ENCODE measurements at regions of chr4 and their contacts with region 1.

Region 1: DNA sequence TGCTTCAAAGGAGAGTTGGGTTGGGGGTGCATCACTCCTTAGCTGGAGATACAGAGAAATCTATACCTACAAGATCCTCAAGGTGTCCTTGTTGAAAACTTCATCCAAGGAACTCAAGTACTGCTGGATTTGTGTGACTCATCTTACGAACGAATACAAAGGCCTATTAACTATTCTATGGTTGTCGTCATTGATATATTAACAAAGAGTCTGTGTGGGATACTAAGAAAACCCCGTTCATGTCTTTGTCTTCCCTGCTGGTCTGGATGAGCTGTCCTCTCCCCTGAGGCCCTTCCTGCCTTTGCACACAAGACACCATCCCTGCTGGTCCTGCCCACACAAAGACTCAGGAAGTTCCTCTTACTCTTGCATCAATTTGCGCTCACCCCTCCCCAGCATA is 54.9 kb upstream of the IRF2 start:
- DNase-seq: no peak
- ATAC-seq: no peak
- H3K4me3 ChIP-seq: no peak overlapping the region
- H3K27ac ChIP-seq: no peak overlapping the region
- H3K4me1 ChIP-seq: peaks cover 0 to 18% (median 9%) of the 10 kb centered on the region in 12 donors
- H3K27me3 ChIP-seq: no peaks in the 10 kb centered on the region
- CTCF ChIP-seq: no peak
- POLR2A ChIP-seq: no peak

Region 2: GRCh38 chr4:184489771-184490170 is 39.5 kb before region 1 on chr4:
- intact Hi-C with region 1: loop called in 1 of 10 experiments (anchors 5 kb)
- DNase-seq: no peak
- ATAC-seq: no peak
- H3K4me3 ChIP-seq: no peak overlapping the region
- H3K27ac ChIP-seq: no peak overlapping the region
- H3K4me1 ChIP-seq: no peaks in the 10 kb centered on the region
- H3K27me3 ChIP-seq: no peaks in the 10 kb centered on the region
- CTCF ChIP-seq: no peak
- POLR2A ChIP-seq: no peak

Region 3: DNA sequence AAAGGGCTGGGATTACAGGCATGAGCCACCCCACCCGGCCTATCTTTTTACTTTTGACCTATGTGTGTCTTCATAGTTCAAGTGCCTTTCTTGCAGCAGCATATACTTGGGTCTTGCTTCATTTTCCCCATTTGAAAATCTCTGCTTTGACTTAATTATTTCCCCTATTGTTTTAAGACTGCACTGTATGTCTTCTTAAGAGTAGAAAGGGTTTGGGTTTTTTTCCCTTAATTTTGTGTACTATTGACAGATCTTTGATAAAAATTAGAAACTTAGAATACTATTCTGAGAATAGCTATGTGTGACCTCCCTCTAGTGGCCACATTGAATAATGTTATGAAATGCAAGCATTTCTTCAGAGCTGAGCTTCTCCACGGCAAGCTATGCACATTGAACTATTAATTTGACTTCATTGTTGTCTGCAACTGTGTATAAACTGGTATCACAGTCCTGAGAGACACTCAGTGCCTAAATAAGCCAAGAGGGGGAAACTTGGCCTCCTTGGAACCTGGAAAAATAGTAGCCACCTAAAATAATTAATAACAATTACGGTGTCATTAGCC is 605.1 kb after region 1 on chr4:
- intact Hi-C with region 1: no loop called
- DNase-seq: no peak
- ATAC-seq: peak in 3 of 4 donors; percentile 39 to 47 (median 43)
- H3K4me3 ChIP-seq: no peak overlapping the region
- H3K27ac ChIP-seq: no peak overlapping the region
- H3K4me1 ChIP-seq: peaks cover 0 to 24% (median 9%) of the 10 kb centered on the region in 12 donors
- H3K27me3 ChIP-seq: no peaks in the 10 kb centered on the region
- CTCF ChIP-seq: peak; percentile 70 to 89 (median 80)
- POLR2A ChIP-seq: no peak

Region 4: GRCh38 chr4:185384930-185385331 is 855.6 kb after region 1 on chr4:
- intact Hi-C with region 1: no loop called
- DNase-seq: peak in 2 of 5 donors; percentile 18 to 29
- ATAC-seq: peak; percentile 18 to 89 (median 58)
- H3K4me3 ChIP-seq: peak overlapping the region in 6 of 12 donors; percentile 7 to 32 (median 20)
- H3K27ac ChIP-seq: peak overlapping the region in 10 of 12 donors; percentile 2 to 75 (median 50)
- H3K4me1 ChIP-seq: peaks cover 0 to 14% (median 0%) of the 10 kb centered on the region in 12 donors
- H3K27me3 ChIP-seq: no peaks in the 10 kb centered on the region
- CTCF ChIP-seq: no peak
- POLR2A ChIP-seq: no peak

Measured in heart left ventricle (tissue), 16 donors.